Panc1 (cell line): ENCODE measurements at regions of chr17 and their contacts with region 1.

Region 1: GRCh38 chr17:43760254-43760852 is 1.8 kb upstream of the SOST start:
- DNase-seq: peak; percentile 78
- ATAC-seq: peak; percentile 93
- H3K4me3 ChIP-seq: no peak overlapping the region
- H3K27ac ChIP-seq: no peak overlapping the region
- H3K4me1 ChIP-seq: no peaks in the 10 kb centered on the region
- H3K27me3 ChIP-seq: no peaks in the 10 kb centered on the region
- CTCF ChIP-seq: peak; percentile 97

Region 2: GRCh38 chr17:43634591-43635125 is 125.7 kb before region 1 on chr17:
- CTCF ChIA-PET with region 1: no interaction called
- POLR2A ChIA-PET with region 1: no interaction called
- in situ Hi-C with region 1: no loop called
- intact Hi-C with region 1: no loop called
- DNase-seq: no peak
- ATAC-seq: no peak
- H3K4me3 ChIP-seq: no peak overlapping the region
- H3K27ac ChIP-seq: no peak overlapping the region
- H3K4me1 ChIP-seq: no peaks in the 10 kb centered on the region
- H3K27me3 ChIP-seq: no peaks in the 10 kb centered on the region
- CTCF ChIP-seq: no peak

Region 3: DNA sequence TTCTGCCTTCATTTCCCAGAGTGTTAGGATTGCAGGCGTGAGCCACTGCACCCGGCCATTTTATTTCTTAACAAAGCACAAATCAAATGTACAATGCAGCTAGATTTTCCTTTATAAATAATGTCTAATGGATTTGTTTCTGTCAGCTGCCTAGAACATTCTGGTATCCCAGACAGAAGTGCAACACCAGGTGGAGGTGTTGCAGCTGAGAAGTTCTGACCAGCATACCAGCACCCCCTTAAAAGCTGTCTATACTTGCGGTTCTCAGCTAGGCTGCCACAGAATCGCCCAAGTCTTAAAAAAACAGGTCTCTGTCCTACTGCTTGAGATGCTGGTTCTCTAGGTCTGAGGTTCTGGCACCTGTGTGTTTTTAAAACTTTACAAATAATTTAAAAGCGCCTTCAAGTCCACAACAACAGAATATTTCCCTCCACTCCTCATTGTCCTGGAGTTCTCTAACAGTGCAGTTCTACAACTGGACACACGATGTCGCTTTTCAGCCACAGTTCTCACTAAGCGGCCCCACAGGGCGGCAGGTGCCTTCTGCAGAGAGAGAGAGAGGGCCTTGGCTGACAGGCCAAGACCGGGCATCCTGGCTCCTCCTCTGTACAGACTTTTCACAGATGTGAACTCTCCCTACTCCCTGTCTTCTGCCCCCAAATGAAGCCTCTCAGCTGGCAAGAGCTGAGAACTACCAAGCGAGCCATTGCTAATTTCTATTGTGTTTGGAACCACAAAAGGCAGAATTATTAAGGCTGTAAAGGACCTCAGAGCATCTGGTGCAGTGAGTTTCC is 66.1 kb before region 1 on chr17:
- CTCF ChIA-PET with region 1: interaction called, 24 read pairs
- POLR2A ChIA-PET with region 1: no interaction called
- in situ Hi-C with region 1: no loop called
- intact Hi-C with region 1: loop called (anchors 1 kb)
- DNase-seq: peak; percentile 39
- ATAC-seq: peak; percentile 97
- H3K4me3 ChIP-seq: no peak overlapping the region
- H3K27ac ChIP-seq: no peak overlapping the region
- H3K4me1 ChIP-seq: no peaks in the 10 kb centered on the region
- H3K27me3 ChIP-seq: no peaks in the 10 kb centered on the region
- CTCF ChIP-seq: peak; percentile 84

Region 4: GRCh38 chr17:43701318-43701743 is 59.0 kb before region 1 on chr17:
- CTCF ChIA-PET with region 1: interaction called, 4 read pairs
- POLR2A ChIA-PET with region 1: no interaction called
- in situ Hi-C with region 1: loop called (anchors 10 kb)
- intact Hi-C with region 1: no loop called
- DNase-seq: no peak
- ATAC-seq: no peak
- H3K4me3 ChIP-seq: no peak overlapping the region
- H3K27ac ChIP-seq: no peak overlapping the region
- H3K4me1 ChIP-seq: no peaks in the 10 kb centered on the region
- H3K27me3 ChIP-seq: no peaks in the 10 kb centered on the region
- CTCF ChIP-seq: no peak